Activated CD4-positive, alpha-beta T cell treated with anti-CD3 and anti-CD28 coated beads for 36 hours (primary cell): ENCODE measurements at regions of chr10 and their contacts with region 1.

Region 1: GRCh38 chr10:102476466-102477141 is 25.3 kb upstream of the C10orf95 start:
- DNase-seq: peak; percentile 36
- ATAC-seq: no peak
- H3K4me3 Mint-ChIP-seq: no peak overlapping the region
- H3K27ac Mint-ChIP-seq: peak overlapping the region; percentile 78
- H3K4me1 Mint-ChIP-seq: peaks cover 28% of the 10 kb centered on the region
- H3K27me3 Mint-ChIP-seq: no peaks in the 10 kb centered on the region

Region 2: GRCh38 chr10:101297901-101298486 is 1178.6 kb before region 1 on chr10:
- CTCF ChIA-PET with region 1: no interaction called
- POLR2A ChIA-PET with region 1: no interaction called
- intact Hi-C with region 1: no loop called
- DNase-seq: peak; percentile 89
- ATAC-seq: peak; percentile 90
- H3K4me3 Mint-ChIP-seq: no peak overlapping the region
- H3K27ac Mint-ChIP-seq: no peak overlapping the region
- H3K4me1 Mint-ChIP-seq: peaks cover 2% of the 10 kb centered on the region
- H3K27me3 Mint-ChIP-seq: peaks cover 41% of the 10 kb centered on the region

Region 3: DNA sequence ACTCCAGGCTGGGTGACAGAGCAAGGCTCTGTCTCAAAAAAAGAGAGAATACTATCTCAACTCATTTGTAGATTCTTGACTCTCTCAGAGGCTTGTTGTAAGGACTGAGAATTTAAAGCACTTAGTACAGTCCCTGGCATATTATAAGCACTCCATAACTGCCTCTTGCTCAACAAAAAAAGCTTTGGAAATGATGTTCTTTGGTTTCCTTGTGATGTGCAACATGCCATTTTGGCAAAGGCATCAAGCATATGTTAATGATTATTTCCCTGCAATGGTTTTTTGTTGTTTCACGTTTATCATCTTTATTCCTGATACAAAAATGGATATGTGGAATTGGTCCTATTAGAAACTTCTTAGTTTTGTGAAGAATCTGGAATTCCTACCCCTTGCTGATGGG is 308.7 kb before region 1 on chr10:
- CTCF ChIA-PET with region 1: interaction called, 11 read pairs
- POLR2A ChIA-PET with region 1: interaction called, 3 read pairs
- intact Hi-C with region 1: loop called (anchors 1 to 2 kb)
- DNase-seq: no peak
- ATAC-seq: no peak
- H3K4me3 Mint-ChIP-seq: no peak overlapping the region
- H3K27ac Mint-ChIP-seq: no peak overlapping the region
- H3K4me1 Mint-ChIP-seq: peaks cover 4% of the 10 kb centered on the region
- H3K27me3 Mint-ChIP-seq: no peaks in the 10 kb centered on the region

Region 4: GRCh38 chr10:102384053-102384452 is 92.6 kb before region 1 on chr10:
- CTCF ChIA-PET with region 1: interaction called, 18 read pairs
- POLR2A ChIA-PET with region 1: no interaction called
- intact Hi-C with region 1: no loop called
- DNase-seq: peak; percentile 51
- ATAC-seq: peak; percentile 64
- H3K4me3 Mint-ChIP-seq: no peak overlapping the region
- H3K27ac Mint-ChIP-seq: no peak overlapping the region
- H3K4me1 Mint-ChIP-seq: peaks cover 2% of the 10 kb centered on the region
- H3K27me3 Mint-ChIP-seq: no peaks in the 10 kb centered on the region

Region 5: DNA sequence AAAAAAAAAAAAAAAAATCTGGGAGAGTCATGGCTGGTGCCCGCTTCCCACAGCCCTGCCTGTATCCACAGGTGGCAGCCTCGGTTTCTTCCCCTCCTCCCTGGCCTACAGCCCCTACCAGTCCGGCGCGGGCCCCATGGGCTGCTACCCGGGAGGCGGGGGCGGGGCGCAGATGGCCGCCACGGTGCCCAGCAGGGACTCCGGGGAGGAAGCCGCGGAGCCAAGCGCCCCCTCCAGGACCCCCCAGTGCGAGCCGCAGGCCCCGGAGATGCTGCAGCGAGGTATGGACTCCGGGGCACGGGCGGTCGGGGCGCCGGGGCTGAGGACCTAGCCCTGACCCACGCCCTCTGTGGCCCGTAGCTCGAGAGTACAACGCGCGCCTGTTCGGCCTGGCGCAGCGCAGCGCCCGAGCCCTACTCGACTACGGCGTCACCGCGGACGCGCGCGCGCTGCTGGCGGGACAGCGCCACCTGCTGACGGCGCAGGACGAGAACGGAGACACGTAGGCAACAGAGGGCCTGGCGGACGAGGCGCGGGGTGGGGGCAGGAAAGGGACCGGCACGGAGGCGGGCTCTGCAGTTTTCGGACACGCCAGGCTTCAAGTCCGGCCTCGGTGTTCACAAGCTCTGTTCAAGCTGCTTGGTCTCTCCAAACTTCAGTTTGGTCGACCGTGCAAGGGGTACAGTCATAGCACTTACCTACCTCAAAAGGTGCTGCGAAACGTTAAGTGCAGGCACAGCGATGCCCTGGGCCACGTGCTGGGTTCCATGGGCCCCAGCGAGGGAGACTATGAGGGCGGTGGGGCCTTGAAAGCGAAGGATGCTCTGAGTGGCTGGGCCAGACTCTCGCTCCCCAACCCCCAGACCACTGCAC is 77.2 kb before region 1 on chr10:
- CTCF ChIA-PET with region 1: interaction called, 16 read pairs
- POLR2A ChIA-PET with region 1: no interaction called
- intact Hi-C with region 1: loop called (anchors 1 kb)
- DNase-seq: peak; percentile 94
- ATAC-seq: peak; percentile 60
- H3K4me3 Mint-ChIP-seq: peak overlapping the region; percentile 95
- H3K27ac Mint-ChIP-seq: peak overlapping the region; percentile 98
- H3K4me1 Mint-ChIP-seq: peaks cover 41% of the 10 kb centered on the region
- H3K27me3 Mint-ChIP-seq: no peaks in the 10 kb centered on the region

Region 6: DNA sequence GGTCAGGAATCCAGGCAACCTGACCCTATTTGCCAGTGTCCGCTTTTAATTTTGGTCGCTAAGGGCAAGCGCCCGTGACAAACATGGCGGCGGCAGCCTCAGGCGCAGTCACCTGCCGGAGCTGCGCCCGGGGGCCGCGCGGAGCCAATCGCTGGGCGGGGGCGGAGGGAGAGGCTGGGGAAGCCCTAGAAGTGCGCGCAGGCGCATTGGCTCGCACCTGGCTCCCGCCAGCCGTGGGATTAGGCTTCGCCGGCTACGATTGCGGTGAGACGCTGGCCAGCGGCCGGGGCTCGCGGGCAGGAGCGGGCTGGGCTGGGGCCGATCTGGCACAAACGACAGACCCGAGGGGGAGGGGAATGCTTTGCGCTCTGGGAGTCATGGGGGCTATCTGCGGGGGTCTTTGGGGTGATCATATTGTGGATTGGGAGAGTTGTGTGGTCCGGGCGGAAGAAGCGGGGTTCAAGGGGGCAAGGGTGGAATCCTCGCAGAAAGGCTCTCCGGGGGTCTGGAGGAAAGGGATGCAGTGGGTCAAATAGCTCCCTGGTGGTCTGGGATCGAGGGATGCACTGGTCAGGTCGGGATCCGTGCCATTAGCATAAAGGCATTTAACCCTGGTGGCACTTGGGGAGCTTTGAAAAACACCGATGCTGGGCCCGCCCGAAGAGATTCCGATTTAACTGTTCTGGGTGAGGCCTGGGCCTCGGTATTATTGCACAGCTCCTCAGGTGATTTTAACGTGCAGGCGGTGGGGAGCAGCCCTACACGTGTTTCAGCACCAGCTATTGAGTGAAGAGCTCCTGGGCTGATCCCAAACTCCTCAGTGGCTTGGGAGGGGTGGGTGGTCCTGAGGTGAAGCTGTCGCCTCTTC is 15.2 kb before region 1 on chr10:
- CTCF ChIA-PET with region 1: interaction called, 18 read pairs
- POLR2A ChIA-PET with region 1: no interaction called
- intact Hi-C with region 1: no loop called
- DNase-seq: peak; percentile 97
- ATAC-seq: peak; percentile 98
- H3K4me3 Mint-ChIP-seq: peak overlapping the region; percentile 85
- H3K27ac Mint-ChIP-seq: peak overlapping the region; percentile 73
- H3K4me1 Mint-ChIP-seq: peaks cover 27% of the 10 kb centered on the region
- H3K27me3 Mint-ChIP-seq: no peaks in the 10 kb centered on the region